HEK293T (cell line): ENCODE measurements at regions of chr12 and their contacts with region 1.

Region 1: GRCh38 chr12:91382081-91382543 is 199.5 kb upstream of the DCN start:
- DNase-seq: peak; percentile 52

Region 2: GRCh38 chr12:92649511-92650227 is 1267.6 kb after region 1 on chr12:
- CTCF ChIA-PET with region 1: interaction called, 12 read pairs
- POLR2A ChIA-PET with region 1: no interaction called
- DNase-seq: peak; percentile 71